ENCODE measurements at regions of chr18 and their contacts with region 1.

Region 1: DNA sequence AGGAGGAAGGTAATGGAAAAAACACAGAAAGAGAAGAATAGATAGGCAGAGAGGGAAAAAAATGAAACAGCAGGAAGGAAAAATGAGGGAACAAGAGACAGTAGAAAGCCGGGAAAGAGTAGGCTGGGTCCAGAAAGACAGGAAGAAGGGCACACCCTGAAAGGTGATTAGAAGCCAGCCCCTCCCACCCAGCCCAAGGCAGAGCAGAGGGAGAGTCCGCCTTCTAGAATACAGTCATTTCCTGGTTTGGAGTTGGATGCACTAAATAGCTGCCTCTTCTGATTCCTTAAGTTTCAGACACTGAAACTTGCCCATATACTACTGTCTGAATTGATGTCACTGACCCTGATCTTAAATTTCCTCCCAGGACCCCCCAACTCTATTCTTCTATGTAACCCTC is 17.9 kb upstream of the DSG3 start:
- DNase-seq: peak; percentile 50
- ATAC-seq: peak; percentile 95
- H3K4me3 ChIP-seq: no peak overlapping the region
- H3K27ac ChIP-seq: no peak overlapping the region
- H3K4me1 ChIP-seq: peaks cover 10% of the 10 kb centered on the region; the same call in 1 of the 2 replicates
- H3K27me3 ChIP-seq: no peaks in the 10 kb centered on the region
- CTCF ChIP-seq: no peak

Region 2: GRCh38 chr18:31393286-31393685 is 36.3 kb before region 1 on chr18:
- CTCF ChIA-PET with region 1: no interaction called
- POLR2A ChIA-PET with region 1: no interaction called
- intact Hi-C with region 1: no loop called
- DNase-seq: no peak
- ATAC-seq: no peak
- H3K4me3 ChIP-seq: no peak overlapping the region
- H3K27ac ChIP-seq: no peak overlapping the region
- H3K4me1 ChIP-seq: no peaks in the 10 kb centered on the region
- H3K27me3 ChIP-seq: no peaks in the 10 kb centered on the region
- CTCF ChIP-seq: no peak

Region 3: GRCh38 chr18:31490387-31490786 is 60.8 kb after region 1 on chr18:
- CTCF ChIA-PET with region 1: no interaction called
- POLR2A ChIA-PET with region 1: interaction called, 20 read pairs
- intact Hi-C with region 1: no loop called
- DNase-seq: peak; percentile 68
- ATAC-seq: peak; percentile 81
- H3K4me3 ChIP-seq: 0 out of 2 replicates have a peak overlapping the region, but pooled peaks have one; percentile 35
- H3K27ac ChIP-seq: peak overlapping the region; percentile 91
- H3K4me1 ChIP-seq: peaks cover 46% of the 10 kb centered on the region
- H3K27me3 ChIP-seq: no peaks in the 10 kb centered on the region
- CTCF ChIP-seq: no peak

Measured in PC-3 (cell line).